Astrocyte of the cerebellum (primary cell): ENCODE measurements at regions of chr17 and their contacts with region 1.

Region 1: GRCh38 chr17:31858642-31859473 is at the start of gene COPRS:
- DNase-seq: peak; percentile 50
- H3K4me3 ChIP-seq: peak within 1 kb of the TSS; percentile 59
- CTCF ChIP-seq: no peak

Region 2: GRCh38 chr17:31425282-31426040 is 433.4 kb before region 1 on chr17:
- in situ Hi-C with region 1: loop called (anchors 25 kb)
- DNase-seq: no peak
- H3K4me3 ChIP-seq: no peak overlapping the region
- CTCF ChIP-seq: no peak